Activated CD8-positive, alpha-beta T cell treated with anti-CD3 and anti-CD28 coated beads, Interleukin-2, amount 10 ng/mL, durations not matched to agents 7 days and 5 days (primary cell): ENCODE measurements at regions of chr11 and their contacts with region 1.

Region 1: DNA sequence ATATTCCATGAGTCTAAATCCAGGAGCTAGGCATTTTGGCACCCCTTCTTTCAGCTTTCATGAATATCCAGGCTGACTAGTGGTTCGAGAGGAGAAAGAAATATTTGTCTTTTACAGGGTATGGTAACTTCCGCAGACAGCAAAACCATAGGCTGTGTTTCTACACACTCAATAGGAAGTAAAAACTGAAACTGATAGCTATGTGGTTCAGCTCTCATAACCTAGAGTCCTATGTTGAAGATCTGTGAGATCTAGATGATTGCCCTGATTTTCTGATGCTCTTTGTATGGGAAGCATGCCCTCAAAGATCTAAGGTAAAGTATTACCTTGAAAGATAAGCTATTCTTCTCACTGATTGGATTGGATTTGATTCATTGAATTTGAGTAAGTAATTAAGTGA is 118.3 kb downstream of the CD44 start:
- DNase-seq: peak; percentile 30
- ATAC-seq: peak; percentile 100
- H3K4me3 Mint-ChIP-seq: peak overlapping the region; percentile 45
- H3K27ac Mint-ChIP-seq: peak overlapping the region; percentile 87
- H3K4me1 Mint-ChIP-seq: peaks cover 40% of the 10 kb centered on the region
- H3K27me3 Mint-ChIP-seq: peaks cover 6% of the 10 kb centered on the region

Region 2: DNA sequence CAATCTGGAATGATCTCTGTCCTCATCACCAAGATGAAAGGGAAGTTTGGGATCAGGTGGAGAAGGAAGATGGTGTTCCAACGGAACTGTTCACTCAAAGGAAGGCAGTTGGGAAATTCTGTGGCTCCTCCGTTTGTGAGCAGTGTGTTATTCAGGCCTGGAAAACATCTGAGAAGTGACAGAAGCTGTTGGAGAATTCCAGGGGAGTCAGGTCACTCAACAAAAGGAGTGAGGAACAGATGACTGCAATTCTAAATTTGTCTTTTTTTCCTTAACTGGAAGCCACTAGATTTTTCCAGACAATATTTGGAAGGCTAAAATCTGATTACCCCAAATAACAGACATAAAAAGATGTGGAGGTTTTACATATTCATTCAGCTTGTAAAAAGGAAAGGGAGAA is 10.5 kb before region 1 on chr11:
- CTCF ChIA-PET with region 1: interaction called, 10 read pairs
- POLR2A ChIA-PET with region 1: no interaction called
- DNase-seq: no peak
- ATAC-seq: no peak
- H3K4me3 Mint-ChIP-seq: no peak overlapping the region
- H3K27ac Mint-ChIP-seq: peak overlapping the region; percentile 28
- H3K4me1 Mint-ChIP-seq: peaks cover 65% of the 10 kb centered on the region
- H3K27me3 Mint-ChIP-seq: no peaks in the 10 kb centered on the region

Region 3: DNA sequence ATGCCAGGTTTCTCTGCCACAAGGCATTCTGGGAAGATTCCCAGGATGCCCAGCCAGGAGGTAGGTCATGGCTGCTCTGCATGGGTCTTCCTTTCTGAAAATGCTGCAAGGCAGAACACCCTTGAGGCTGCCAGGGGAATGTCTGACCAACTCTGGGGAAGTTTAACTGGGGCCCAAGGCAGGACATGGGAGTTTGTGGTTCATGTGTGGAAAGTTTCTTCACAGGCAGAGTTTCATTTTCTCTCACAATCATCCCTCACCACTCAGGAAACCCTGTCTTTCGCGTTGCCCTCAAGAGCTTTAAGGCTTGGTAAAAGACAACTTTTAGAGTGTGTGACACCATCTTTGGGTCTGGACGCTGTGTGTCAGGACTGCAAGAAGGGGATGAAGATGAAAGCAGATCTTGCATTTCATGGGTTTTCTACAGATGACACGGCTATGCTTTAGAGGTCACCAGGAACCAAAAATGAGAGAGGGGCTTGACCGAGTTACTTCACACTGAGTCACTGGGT is 15.2 kb after region 1 on chr11:
- CTCF ChIA-PET with region 1: interaction called, 10 read pairs
- POLR2A ChIA-PET with region 1: no interaction called
- DNase-seq: peak; percentile 71
- ATAC-seq: peak; percentile 93
- H3K4me3 Mint-ChIP-seq: peak overlapping the region; percentile 52
- H3K27ac Mint-ChIP-seq: peak overlapping the region; percentile 89
- H3K4me1 Mint-ChIP-seq: peaks cover 62% of the 10 kb centered on the region
- H3K27me3 Mint-ChIP-seq: no peaks in the 10 kb centered on the region

Region 4: GRCh38 chr11:35347921-35348331 is 90.6 kb after region 1 on chr11:
- CTCF ChIA-PET with region 1: no interaction called
- POLR2A ChIA-PET with region 1: no interaction called
- DNase-seq: no peak
- ATAC-seq: no peak
- H3K4me3 Mint-ChIP-seq: no peak overlapping the region
- H3K27ac Mint-ChIP-seq: no peak overlapping the region
- H3K4me1 Mint-ChIP-seq: peaks cover 43% of the 10 kb centered on the region
- H3K27me3 Mint-ChIP-seq: peaks cover 3% of the 10 kb centered on the region